Endothelial cell of umbilical vein (primary cell): ENCODE measurements at regions of chr16 and their contacts with region 1.

Region 1: GRCh38 chr16:53054670-53055485 is at the start of gene CHD9:
- DNase-seq: peak; percentile 87
- H3K4me3 ChIP-seq: peak within 1 kb of the TSS; percentile 47 to 75 (median 57)
- H3K27ac ChIP-seq: peak within 1 kb of the TSS; percentile 75
- H3K4me1 ChIP-seq: peaks cover 26% of the 10 kb centered on the region
- H3K27me3 ChIP-seq: no peaks in the 10 kb centered on the region
- CTCF ChIP-seq: peak; percentile 99
- POLR2A ChIP-seq: peak; percentile 54
- total RNA-seq, gene CHD9: 59.2 and 62.1 TPM in 2 replicates

Region 2: DNA sequence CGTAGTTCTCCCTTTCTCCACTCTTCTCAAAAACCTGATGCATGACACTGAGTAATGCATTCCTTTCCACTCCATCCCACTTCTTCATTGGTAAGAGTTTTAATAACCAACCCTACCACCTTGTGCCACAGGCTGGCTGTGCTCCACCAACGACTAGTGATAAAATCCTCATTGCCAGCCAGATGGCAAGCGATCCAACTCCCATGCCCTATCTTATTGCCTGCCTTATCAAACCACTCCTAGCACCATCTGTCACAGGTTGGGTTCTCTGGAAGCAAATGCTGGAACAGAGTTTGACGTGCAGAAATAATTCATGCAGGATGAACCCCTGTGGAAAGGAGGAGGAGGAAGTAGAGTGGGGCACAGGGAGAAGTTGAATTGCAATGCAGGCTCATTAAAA is 101.7 kb before region 1 on chr16:
- CTCF ChIA-PET with region 1: no interaction called
- POLR2A ChIA-PET with region 1: no interaction called
- dilution Hi-C with region 1: no loop called
- intact Hi-C with region 1: no loop called
- DNase-seq: no peak
- H3K4me3 ChIP-seq: no peak overlapping the region
- H3K27ac ChIP-seq: no peak overlapping the region
- H3K4me1 ChIP-seq: no peaks in the 10 kb centered on the region
- H3K27me3 ChIP-seq: no peaks in the 10 kb centered on the region
- CTCF ChIP-seq: no peak
- POLR2A ChIP-seq: no peak

Region 3: DNA sequence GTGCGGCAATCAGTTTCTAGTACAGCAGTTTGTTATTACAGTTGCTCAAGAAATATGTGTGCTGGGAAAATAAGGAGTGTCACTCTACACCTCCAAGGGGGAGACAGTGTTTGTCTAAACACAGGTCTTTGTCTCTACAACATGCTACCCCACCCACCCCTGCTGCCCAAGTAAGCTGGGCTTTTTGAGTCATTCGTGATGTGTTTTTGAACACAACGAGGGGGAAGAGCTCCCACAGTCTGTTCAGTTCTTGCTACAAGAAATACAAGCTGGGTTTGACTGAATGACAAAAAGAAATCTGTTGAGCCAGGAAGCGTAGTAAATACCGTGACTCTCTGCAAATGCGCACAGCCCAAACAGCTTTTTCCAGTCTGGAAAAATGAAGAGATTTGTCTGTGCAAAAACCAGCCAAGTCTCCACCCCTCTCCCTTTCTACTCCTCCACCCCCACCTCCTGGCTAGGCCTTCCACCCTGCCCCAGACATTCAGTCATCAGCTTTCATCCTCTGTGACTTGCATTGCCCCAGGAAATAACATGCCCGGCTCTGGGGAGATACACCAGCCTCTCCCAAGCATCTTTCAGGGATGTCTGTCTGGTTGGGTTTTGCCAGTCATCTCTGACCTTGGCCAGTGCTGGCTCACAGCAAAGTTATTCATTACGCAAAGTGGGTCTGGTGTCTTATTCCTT is 25.6 kb after region 1 on chr16:
- CTCF ChIA-PET with region 1: interaction called, 19 read pairs
- POLR2A ChIA-PET with region 1: no interaction called
- dilution Hi-C with region 1: no loop called
- intact Hi-C with region 1: no loop called
- DNase-seq: peak; percentile 80
- H3K4me3 ChIP-seq: no peak overlapping the region
- H3K27ac ChIP-seq: peak overlapping the region; percentile 74
- H3K4me1 ChIP-seq: peaks cover 32% of the 10 kb centered on the region
- H3K27me3 ChIP-seq: no peaks in the 10 kb centered on the region
- CTCF ChIP-seq: no peak
- POLR2A ChIP-seq: no peak

Region 4: GRCh38 chr16:53099318-53100130 is 44.6 kb after region 1 on chr16:
- CTCF ChIA-PET with region 1: interaction called, 62 read pairs
- POLR2A ChIA-PET with region 1: interaction called, 11 read pairs
- dilution Hi-C with region 1: no loop called
- intact Hi-C with region 1: loop called (anchors 1 kb)
- DNase-seq: peak; percentile 94
- H3K4me3 ChIP-seq: peak overlapping the region in 2 of 3 experiments; percentile 18 to 23
- H3K27ac ChIP-seq: peak overlapping the region; percentile 98
- H3K4me1 ChIP-seq: peaks cover 43% of the 10 kb centered on the region
- H3K27me3 ChIP-seq: no peaks in the 10 kb centered on the region
- CTCF ChIP-seq: no peak
- POLR2A ChIP-seq: no peak

Region 5: GRCh38 chr16:53154513-53154912 is 99.6 kb after region 1 on chr16:
- CTCF ChIA-PET with region 1: interaction called, 34 read pairs
- POLR2A ChIA-PET with region 1: no interaction called
- dilution Hi-C with region 1: no loop called
- intact Hi-C with region 1: no loop called
- DNase-seq: no peak
- H3K4me3 ChIP-seq: no peak overlapping the region
- H3K27ac ChIP-seq: no peak overlapping the region
- H3K4me1 ChIP-seq: no peaks in the 10 kb centered on the region
- H3K27me3 ChIP-seq: no peaks in the 10 kb centered on the region
- CTCF ChIP-seq: no peak
- POLR2A ChIP-seq: no peak

Region 6: GRCh38 chr16:53207810-53208752 is 153.2 kb after region 1 on chr16:
- CTCF ChIA-PET with region 1: interaction called, 61 read pairs
- POLR2A ChIA-PET with region 1: no interaction called
- dilution Hi-C with region 1: no loop called
- intact Hi-C with region 1: loop called (anchors 1 kb)
- DNase-seq: peak; percentile 88
- H3K4me3 ChIP-seq: peak overlapping the region; percentile 34 to 91 (median 70)
- H3K27ac ChIP-seq: peak overlapping the region; percentile 92
- H3K4me1 ChIP-seq: peaks cover 41% of the 10 kb centered on the region
- H3K27me3 ChIP-seq: no peaks in the 10 kb centered on the region
- CTCF ChIP-seq: peak; percentile 33 to 51
- POLR2A ChIP-seq: peak; percentile 53

Region 7: GRCh38 chr16:53282975-53283946 is 228.4 kb after region 1 on chr16:
- CTCF ChIA-PET with region 1: interaction called, 37 read pairs
- POLR2A ChIA-PET with region 1: no interaction called
- dilution Hi-C with region 1: no loop called
- intact Hi-C with region 1: loop called (anchors 1 kb)
- DNase-seq: peak; percentile 74
- H3K4me3 ChIP-seq: no peak overlapping the region
- H3K27ac ChIP-seq: no peak overlapping the region
- H3K4me1 ChIP-seq: peaks cover 11% of the 10 kb centered on the region
- H3K27me3 ChIP-seq: no peaks in the 10 kb centered on the region
- CTCF ChIP-seq: peak; percentile 51 to 64
- POLR2A ChIP-seq: no peak

Region 8: DNA sequence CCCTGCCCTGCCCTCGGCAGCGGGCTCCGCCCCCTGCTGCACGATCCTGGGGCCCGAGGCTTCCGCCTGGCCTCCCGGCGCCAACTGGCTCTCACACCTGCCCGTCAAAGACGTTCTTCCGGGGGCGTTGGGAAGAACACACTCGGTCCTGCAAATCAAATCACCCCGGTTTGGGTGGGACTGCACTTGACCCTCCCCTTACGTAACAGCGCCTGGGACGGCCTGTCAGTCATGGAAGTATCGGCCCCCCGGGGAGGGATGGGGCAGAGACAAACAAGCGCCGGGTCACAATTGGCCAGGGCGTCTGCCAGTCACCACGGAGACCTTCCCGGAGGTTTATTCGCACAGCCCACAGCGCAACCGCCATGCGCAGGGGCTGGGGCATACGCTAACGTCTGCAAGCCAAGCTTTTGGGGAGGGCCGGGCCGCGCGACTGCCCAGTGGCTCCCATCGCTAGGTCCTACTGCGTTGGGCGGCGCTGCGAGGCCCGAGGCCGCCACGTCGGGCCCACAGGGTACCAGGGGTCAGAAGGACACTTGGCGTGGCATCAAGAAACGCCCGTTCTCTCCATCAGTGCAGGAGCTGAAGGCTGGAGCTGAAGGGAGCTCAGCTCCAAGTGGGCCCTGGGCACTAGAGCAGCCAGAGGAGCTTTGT is 448.5 kb after region 1 on chr16:
- CTCF ChIA-PET with region 1: no interaction called
- POLR2A ChIA-PET with region 1: no interaction called
- dilution Hi-C with region 1: no loop called
- intact Hi-C with region 1: loop called (anchors 10 kb)
- DNase-seq: peak; percentile 100
- H3K4me3 ChIP-seq: peak overlapping the region in 2 of 3 experiments; percentile 24 to 97
- H3K27ac ChIP-seq: peak overlapping the region; percentile 92
- H3K4me1 ChIP-seq: peaks cover 29% of the 10 kb centered on the region
- H3K27me3 ChIP-seq: no peaks in the 10 kb centered on the region
- CTCF ChIP-seq: no peak
- POLR2A ChIP-seq: peak; percentile 85